K562 (cell line): ENCODE measurements at regions of chr11 and their contacts with region 1.

Region 1: GRCh38 chr11:86068951-86069407 is at the start of gene PICALM:
- DNase-seq: peak; percentile 93 to 100 (median 95)
- ATAC-seq: peak; percentile 78
- H3K4me3 ChIP-seq: peak within 1 kb of the TSS; percentile 64
- H3K27ac ChIP-seq: peak within 1 kb of the TSS; percentile 99
- H3K4me1 ChIP-seq: peaks cover 3 to 32% of the 10 kb centered on the region in 2 experiments; a peak in 3 of 5 replicates
- H3K27me3 ChIP-seq: no peaks in the 10 kb centered on the region
- CTCF ChIP-seq: peak in 1 of 3 experiments; percentile 14; a peak in 1 of 6 replicates
- EP300 ChIP-seq: peak; percentile 62
- POLR2A ChIP-seq: no peak; the same call in 1 of the 2 replicates
- RAD21 ChIP-seq: peak in 1 of 2 experiments; percentile 20; a peak in 1 of 4 replicates
- polyA plus RNA-seq, gene PICALM: 41.3 to 129 TPM

Region 2: DNA sequence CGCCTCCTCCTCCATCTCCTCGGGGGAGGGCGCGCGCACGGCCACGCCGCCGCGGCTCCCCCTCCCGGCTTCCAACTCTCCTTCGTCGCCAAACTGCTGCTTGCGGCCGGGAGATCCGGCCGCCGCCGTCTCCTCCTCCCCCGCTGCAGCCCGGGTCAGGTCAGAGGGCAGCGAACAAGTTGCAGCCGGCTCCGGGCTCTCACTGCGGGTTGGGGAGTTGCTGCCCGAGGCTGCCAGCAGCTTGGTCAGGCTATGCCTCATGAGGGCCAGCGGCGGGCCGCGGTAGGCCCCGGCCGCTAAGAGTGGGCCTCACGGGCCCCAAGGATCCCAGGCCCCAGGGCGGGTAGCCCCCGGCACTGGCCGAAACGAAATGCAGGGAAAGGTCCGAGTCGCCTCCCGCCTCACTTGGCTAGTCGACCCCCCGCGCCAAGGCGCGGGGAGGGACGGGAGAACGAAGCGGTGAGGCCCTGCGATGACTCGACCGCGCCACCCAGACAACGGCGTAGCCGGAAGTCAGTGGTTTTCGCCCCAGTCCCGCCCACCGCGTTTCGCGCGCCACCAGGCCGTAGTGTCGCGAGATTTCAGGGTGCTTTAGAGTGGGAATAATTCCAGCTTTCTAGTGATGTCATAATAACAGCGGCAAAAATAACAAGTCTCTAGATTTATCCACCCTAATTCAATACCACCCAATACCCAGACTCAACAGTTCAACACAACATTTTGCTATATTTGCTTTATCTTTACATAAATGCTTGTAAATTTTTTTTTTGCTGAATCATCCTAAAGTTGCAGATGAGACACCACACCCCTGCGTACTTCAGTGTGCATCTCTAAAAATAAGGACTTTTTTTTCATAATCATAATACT is 404.1 kb before region 1 on chr11 and contains the start of gene CREBZF:
- CTCF ChIA-PET with region 1: no interaction called
- POLR2A ChIA-PET with region 1: no interaction called
- in situ Hi-C with region 1: no loop called
- intact Hi-C with region 1: loop called (anchors 5 kb)
- DNase-seq: peak; percentile 90 to 98 (median 92)
- ATAC-seq: peak; percentile 88
- H3K4me3 ChIP-seq: peak within 1 kb of the TSS; percentile 94
- H3K27ac ChIP-seq: peak within 1 kb of the TSS; percentile 98
- H3K4me1 ChIP-seq: peaks cover 5 to 14% of the 10 kb centered on the region in 2 experiments; a peak in 3 of 5 replicates
- H3K27me3 ChIP-seq: no peaks in the 10 kb centered on the region
- CTCF ChIP-seq: no peak; a peak in 1 of 6 replicates
- EP300 ChIP-seq: no peak
- POLR2A ChIP-seq: peak; percentile 93
- RAD21 ChIP-seq: no peak
- polyA plus RNA-seq, gene CREBZF: 7.2 to 7.4 TPM

Region 3: DNA sequence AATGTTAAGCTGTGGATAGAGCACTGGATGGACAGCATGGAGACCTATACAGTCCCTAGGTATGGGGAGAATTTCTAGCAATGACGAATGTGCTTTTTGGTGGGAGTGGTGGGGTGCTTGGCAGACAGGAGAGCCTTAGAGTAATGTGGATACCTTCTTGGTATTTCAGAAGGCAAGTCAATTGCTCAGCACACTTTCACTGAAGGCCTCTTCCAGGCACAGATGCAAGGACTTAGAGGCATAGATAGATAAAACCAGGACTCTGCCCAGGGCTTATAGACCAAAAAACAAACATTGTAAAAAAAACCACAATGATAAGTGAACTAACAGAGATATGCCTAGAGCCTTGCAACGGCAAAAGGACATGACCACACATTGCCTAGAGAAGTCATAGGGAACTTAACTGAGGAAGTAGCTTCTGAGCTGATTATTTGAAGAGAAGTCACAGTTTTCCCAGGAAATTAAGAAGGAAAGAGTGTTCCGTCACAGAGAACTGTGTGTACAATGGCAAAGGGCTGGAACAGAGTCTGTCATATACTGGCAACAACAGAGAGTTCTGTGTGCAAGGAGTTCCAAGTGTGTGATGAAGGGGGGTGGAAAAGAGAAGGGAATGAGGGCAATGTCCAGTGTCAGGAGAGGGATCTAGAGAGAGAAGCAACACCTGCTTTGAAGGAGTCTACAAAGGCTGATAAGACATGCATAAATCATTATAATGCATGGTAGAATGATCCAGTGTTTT is 65.8 kb after region 1 on chr11:
- CTCF ChIA-PET with region 1: no interaction called
- POLR2A ChIA-PET with region 1: interaction called, 3 read pairs
- in situ Hi-C with region 1: no loop called
- intact Hi-C with region 1: loop called (anchors 2 kb)
- DNase-seq: peak; percentile 29 to 87 (median 51)
- ATAC-seq: peak; percentile 86
- H3K4me3 ChIP-seq: no peak overlapping the region
- H3K27ac ChIP-seq: peak overlapping the region; percentile 78
- H3K4me1 ChIP-seq: peaks cover 22 to 62% of the 10 kb centered on the region in 2 experiments
- H3K27me3 ChIP-seq: no peaks in the 10 kb centered on the region
- CTCF ChIP-seq: no peak
- EP300 ChIP-seq: peak; percentile 89
- POLR2A ChIP-seq: no peak
- RAD21 ChIP-seq: peak; percentile 16 to 38; a peak in 1 of 4 replicates

Region 4: GRCh38 chr11:86174101-86175046 is 105.4 kb after region 1 on chr11:
- CTCF ChIA-PET with region 1: no interaction called
- POLR2A ChIA-PET with region 1: interaction called, 8 read pairs
- in situ Hi-C with region 1: no loop called
- intact Hi-C with region 1: loop called (anchors 1 kb)
- DNase-seq: peak; percentile 76 to 87 (median 78)
- ATAC-seq: peak; percentile 45
- H3K4me3 ChIP-seq: no peak overlapping the region
- H3K27ac ChIP-seq: peak overlapping the region; percentile 81
- H3K4me1 ChIP-seq: peaks cover 54 to 76% of the 10 kb centered on the region in 2 experiments
- H3K27me3 ChIP-seq: no peaks in the 10 kb centered on the region; a peak in 1 of 5 replicates
- CTCF ChIP-seq: no peak
- EP300 ChIP-seq: peak; percentile 90
- POLR2A ChIP-seq: no peak; the same call in 1 of the 2 replicates
- RAD21 ChIP-seq: no peak

Region 5: GRCh38 chr11:86202013-86202336 is 133.0 kb after region 1 on chr11:
- CTCF ChIA-PET with region 1: no interaction called
- POLR2A ChIA-PET with region 1: interaction called, 13 read pairs
- in situ Hi-C with region 1: no loop called
- intact Hi-C with region 1: no loop called
- DNase-seq: peak in 1 of 4 experiments; percentile 55
- ATAC-seq: peak; percentile 66
- H3K4me3 ChIP-seq: peak overlapping the region; percentile 15
- H3K27ac ChIP-seq: peak overlapping the region; percentile 76
- H3K4me1 ChIP-seq: peaks cover 18 to 57% of the 10 kb centered on the region in 2 experiments
- H3K27me3 ChIP-seq: no peaks in the 10 kb centered on the region
- CTCF ChIP-seq: no peak
- EP300 ChIP-seq: no peak
- POLR2A ChIP-seq: no peak
- RAD21 ChIP-seq: no peak